Ascending aorta (tissue), 2 donors: ENCODE measurements at regions of chr19 and their contacts with region 1.

Region 1: DNA sequence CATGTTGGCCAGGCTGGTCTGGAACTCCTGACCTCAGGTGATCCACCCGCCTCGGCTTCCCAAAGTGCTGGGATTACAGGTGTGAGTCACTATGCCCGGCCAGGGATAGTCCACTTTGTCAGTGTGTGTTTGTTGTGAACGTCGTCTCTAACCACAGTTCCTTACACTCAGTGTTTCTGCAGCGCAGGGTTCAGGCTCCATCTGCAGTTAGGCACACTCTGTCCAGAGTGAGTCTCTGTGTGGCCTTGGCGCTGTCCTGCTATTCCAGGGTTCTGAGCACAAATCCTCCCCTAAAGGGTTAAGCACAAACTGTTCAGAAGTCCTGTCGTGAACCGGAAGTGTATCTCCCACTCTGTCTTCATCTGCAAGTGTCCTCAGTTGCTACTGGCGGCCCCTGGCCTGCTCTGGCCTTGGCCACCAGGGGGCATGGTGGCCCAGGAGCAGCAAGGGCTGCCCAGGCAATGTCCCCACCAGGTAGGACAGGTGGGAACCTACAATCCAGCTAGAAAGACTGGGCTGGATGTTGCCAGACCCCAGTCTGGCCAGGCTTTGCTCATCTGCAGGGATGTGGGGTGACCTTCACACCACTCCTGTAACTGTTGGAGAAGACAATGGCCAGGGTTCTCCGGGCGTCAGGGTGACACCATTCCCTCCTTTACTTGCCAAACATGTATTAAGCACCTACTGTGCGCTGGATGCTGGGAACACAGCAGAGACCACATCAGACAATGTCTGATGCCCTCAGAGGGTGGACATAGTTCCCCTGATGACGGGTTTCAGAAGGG is 38.7 kb upstream of the GATAD2A start:
- DNase-seq: peak in 1 of 2 donors; percentile 84
- H3K4me3 ChIP-seq: no peak overlapping the region
- H3K27ac ChIP-seq: no peak overlapping the region
- H3K4me1 ChIP-seq: peaks cover 0 to 2% of the 10 kb centered on the region in 2 donors
- H3K27me3 ChIP-seq: no peaks in the 10 kb centered on the region
- CTCF ChIP-seq: peak; percentile 91 to 95 (median 92)

Region 2: DNA sequence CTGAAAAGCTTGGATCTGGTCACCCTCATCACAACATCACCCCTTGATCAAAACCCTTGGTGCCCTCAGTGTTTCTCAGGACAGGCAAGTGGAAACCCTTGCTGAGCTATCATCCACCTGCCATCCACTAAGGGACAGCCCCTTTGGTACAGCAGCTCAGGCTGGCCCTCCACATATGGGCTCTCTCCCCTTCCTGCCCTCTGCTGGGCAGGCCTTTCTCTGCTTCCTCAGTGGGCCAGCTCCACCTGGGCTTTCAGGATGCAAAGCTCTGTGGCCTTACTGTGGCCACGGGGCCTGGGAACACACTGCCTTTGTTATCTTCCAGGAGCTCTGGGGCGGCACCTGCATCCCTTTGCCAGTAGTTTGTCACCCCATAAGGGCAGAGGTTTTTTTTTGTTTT is 51.4 kb before region 1 on chr19:
- intact Hi-C with region 1: no loop called
- DNase-seq: no peak
- H3K4me3 ChIP-seq: no peak overlapping the region
- H3K27ac ChIP-seq: no peak overlapping the region
- H3K4me1 ChIP-seq: peaks cover 2 to 10% of the 10 kb centered on the region in 2 donors
- H3K27me3 ChIP-seq: no peaks in the 10 kb centered on the region
- CTCF ChIP-seq: no peak

Region 3: GRCh38 chr19:19385108-19385899 is 18.5 kb after region 1 on chr19:
- intact Hi-C with region 1: loop called (anchors 2 kb)
- DNase-seq: peak; percentile 100
- H3K4me3 ChIP-seq: peak overlapping the region; percentile 77 to 89
- H3K27ac ChIP-seq: peak overlapping the region; percentile 83 to 92
- H3K4me1 ChIP-seq: peaks cover 13 to 42% of the 10 kb centered on the region in 2 donors
- H3K27me3 ChIP-seq: no peaks in the 10 kb centered on the region
- CTCF ChIP-seq: peak in 2 of 3 experiments; percentile 28 to 29

Region 4: GRCh38 chr19:19451429-19452242 is 84.8 kb after region 1 on chr19:
- intact Hi-C with region 1: no loop called
- DNase-seq: no peak
- H3K4me3 ChIP-seq: no peak overlapping the region
- H3K27ac ChIP-seq: no peak overlapping the region
- H3K4me1 ChIP-seq: peaks cover 0 to 14% of the 10 kb centered on the region in 2 donors
- H3K27me3 ChIP-seq: no peaks in the 10 kb centered on the region
- CTCF ChIP-seq: no peak